Caco-2 (cell line): ENCODE measurements at regions of chr15 and their contacts with region 1.

Region 1: GRCh38 chr15:60751985-60752952 is 273.3 kb upstream of the ICE2 start:
- DNase-seq: no peak
- H3K4me3 ChIP-seq: no peak overlapping the region
- H3K4me3 Mint-ChIP-seq: no peak overlapping the region
- H3K27ac Mint-ChIP-seq: no peak overlapping the region
- H3K4me1 ChIP-seq: peaks cover 8% of the 10 kb centered on the region
- H3K4me1 Mint-ChIP-seq: no peaks in the 10 kb centered on the region
- H3K27me3 ChIP-seq: no peaks in the 10 kb centered on the region
- H3K27me3 Mint-ChIP-seq: peaks cover 6% of the 10 kb centered on the region
- CTCF ChIP-seq: no peak

Region 2: DNA sequence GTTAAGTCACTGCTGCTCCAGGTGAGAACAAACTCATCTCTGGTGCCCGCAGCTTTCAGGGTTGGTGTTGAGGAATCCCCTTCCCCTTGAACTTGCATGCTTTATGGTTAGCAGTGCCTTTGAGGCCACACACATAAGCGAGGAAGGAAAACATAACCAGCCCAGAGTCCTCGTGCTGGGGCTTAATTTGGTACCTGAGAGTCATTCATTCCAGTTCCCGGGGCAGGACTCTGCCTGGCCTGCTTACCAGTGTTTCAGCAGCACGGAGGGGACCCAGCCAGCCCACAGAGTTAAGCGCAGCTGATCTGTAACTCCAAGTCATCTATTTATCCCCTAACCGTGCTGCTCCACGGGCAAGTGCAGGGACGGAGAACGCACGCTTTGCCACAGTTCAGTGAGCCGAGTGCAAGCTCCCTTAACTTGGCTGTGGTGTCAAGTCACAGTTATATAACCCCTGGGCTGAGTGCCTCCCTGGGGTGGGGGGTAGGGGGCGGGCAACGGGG is 29.0 kb after region 1 on chr15:
- CTCF ChIA-PET with region 1: no interaction called
- POLR2A ChIA-PET with region 1: no interaction called
- intact Hi-C with region 1: no loop called
- DNase-seq: no peak
- H3K4me3 ChIP-seq: no peak overlapping the region
- H3K4me3 Mint-ChIP-seq: no peak overlapping the region
- H3K27ac Mint-ChIP-seq: no peak overlapping the region
- H3K4me1 ChIP-seq: no peaks in the 10 kb centered on the region
- H3K4me1 Mint-ChIP-seq: no peaks in the 10 kb centered on the region
- H3K27me3 ChIP-seq: no peaks in the 10 kb centered on the region
- H3K27me3 Mint-ChIP-seq: peaks cover 7% of the 10 kb centered on the region
- CTCF ChIP-seq: no peak

Region 3: DNA sequence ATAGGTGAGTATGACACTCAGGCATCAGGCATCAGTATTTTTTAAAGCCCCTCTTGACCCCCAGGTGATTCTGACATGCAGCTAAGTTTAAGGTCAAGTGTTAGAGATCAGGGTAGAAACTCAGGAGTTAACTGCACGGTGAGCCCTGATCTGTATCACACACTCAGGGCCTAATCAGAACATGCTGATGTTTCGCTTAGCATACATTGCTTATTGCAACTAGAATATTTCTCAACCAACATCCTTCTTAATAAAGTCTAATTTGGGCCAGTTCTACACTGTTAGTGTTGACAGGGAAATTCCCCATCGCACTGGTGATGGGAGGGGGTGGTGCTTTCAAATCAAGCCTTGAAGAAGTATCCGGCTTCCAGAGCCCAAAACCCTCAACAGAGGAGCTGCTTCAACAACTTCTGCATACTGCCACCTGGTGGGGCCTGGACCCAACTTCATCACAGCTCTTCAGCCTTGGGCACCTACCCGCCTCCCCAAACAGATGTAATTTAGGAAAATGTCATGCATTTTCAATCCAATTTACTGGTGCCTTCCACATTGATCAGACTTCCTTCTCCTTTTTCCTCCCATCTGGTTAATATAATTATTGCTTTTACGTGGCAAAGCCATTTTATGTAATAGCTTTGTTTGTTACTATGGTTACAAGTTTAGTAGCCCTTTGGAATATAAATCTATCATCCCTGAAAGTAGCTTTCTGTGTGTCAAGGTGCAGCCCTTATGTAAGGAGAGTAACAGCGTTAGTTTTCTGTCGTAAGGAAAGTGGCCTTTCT is 164.6 kb after region 1 on chr15:
- CTCF ChIA-PET with region 1: no interaction called
- POLR2A ChIA-PET with region 1: no interaction called
- intact Hi-C with region 1: loop called (anchors 10 kb)
- DNase-seq: peak; percentile 69 to 76
- H3K4me3 ChIP-seq: no peak overlapping the region
- H3K4me3 Mint-ChIP-seq: no peak overlapping the region
- H3K27ac Mint-ChIP-seq: no peak overlapping the region
- H3K4me1 ChIP-seq: peaks cover 31% of the 10 kb centered on the region
- H3K4me1 Mint-ChIP-seq: peaks cover 21% of the 10 kb centered on the region
- H3K27me3 ChIP-seq: no peaks in the 10 kb centered on the region
- H3K27me3 Mint-ChIP-seq: no peaks in the 10 kb centered on the region
- CTCF ChIP-seq: peak; percentile 55 to 66